Gastrocnemius medialis (tissue), 4 donors: ENCODE measurements at regions of chr4 and their contacts with region 1.

Region 1: GRCh38 chr4:173168396-173169177 is at the start of gene GALNT7:
- DNase-seq: peak in 1 of 2 donors; percentile 28
- ATAC-seq: peak; percentile 52 to 59
- H3K4me3 ChIP-seq: peak within 1 kb of the TSS; percentile 60 to 82 (median 74)
- H3K27ac ChIP-seq: peak within 1 kb of the TSS; percentile 73 to 80 (median 77)
- H3K4me1 ChIP-seq: peaks cover 6 to 9% of the 10 kb centered on the region in 2 donors
- H3K27me3 ChIP-seq: peaks cover 9 to 16% (median 14%) of the 10 kb centered on the region in 3 donors
- CTCF ChIP-seq: no peak
- POLR2A ChIP-seq: no peak
- total RNA-seq, gene GALNT7: 0.91 to 2.8 (median 1.1) TPM

Region 2: DNA sequence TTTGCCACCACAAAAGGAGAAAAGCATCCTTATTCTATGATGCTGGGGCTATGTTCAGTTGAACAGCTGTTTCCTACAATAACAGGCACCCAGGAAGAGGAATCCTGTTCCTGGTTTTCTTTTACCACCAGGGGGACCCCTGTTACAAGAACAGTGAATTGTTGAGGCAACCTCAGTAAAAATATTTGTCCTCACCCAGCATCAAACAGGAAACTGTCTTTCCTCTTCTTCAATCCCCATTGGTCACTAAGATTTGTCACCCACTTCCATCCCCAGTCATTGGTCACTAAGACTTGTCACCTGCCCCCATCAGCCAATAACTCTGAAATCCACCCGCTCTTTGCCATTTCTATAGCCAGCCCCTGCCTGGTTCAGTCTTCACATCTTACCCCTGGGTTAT is 143.5 kb before region 1 on chr4:
- in situ Hi-C with region 1: no loop called
- intact Hi-C with region 1: loop called (anchors 5 kb)
- DNase-seq: no peak
- ATAC-seq: peak; percentile 49 to 56
- H3K4me3 ChIP-seq: no peak overlapping the region
- H3K27ac ChIP-seq: no peak overlapping the region
- H3K4me1 ChIP-seq: no peaks in the 10 kb centered on the region
- H3K27me3 ChIP-seq: no peaks in the 10 kb centered on the region
- CTCF ChIP-seq: peak in 4 of 5 experiments; percentile 35 to 44 (median 40)
- POLR2A ChIP-seq: no peak

Region 3: DNA sequence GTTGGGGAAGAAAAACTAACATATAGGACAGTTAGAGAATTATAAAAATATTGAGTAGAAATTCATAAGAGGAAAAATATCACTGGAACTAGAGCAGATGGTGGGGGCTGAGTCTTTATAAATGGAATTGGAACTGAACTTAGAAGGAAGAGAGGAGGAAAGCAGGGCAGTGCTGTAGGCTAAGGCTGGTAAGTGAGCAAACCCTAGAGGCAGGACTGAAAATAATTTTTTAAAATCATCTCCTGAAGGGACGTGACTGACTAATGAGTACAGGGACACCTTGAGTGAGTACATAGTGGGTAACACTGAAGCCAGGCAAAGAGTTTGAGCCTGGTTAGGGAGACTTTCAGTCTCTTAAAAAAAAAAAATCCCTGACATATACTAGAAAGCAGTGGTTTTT is 63.3 kb after region 1 on chr4:
- in situ Hi-C with region 1: no loop called
- intact Hi-C with region 1: loop called (anchors 5 kb)
- DNase-seq: no peak
- ATAC-seq: no peak
- H3K4me3 ChIP-seq: no peak overlapping the region
- H3K27ac ChIP-seq: no peak overlapping the region
- H3K4me1 ChIP-seq: no peaks in the 10 kb centered on the region
- H3K27me3 ChIP-seq: no peaks in the 10 kb centered on the region
- CTCF ChIP-seq: no peak
- POLR2A ChIP-seq: no peak

Region 4: DNA sequence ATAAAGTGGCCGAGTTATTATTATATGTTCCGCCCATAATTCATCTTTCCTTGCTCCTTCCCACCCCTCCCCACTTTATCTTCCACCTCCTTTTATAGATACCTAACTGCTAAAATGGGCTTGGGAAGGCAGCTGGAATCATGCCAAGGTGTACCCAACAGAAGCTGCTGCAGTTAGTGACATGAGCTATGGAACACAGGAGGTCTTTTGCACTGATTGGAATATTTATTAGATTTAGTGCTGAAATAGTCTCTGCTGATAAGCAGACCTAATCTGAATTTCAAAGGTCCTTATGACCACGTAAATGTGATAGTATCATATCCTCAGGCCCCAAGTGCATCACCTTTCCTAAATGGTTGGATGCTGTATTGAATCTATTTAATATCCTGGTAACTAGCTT is 100.7 kb after region 1 on chr4:
- in situ Hi-C with region 1: no loop called
- intact Hi-C with region 1: no loop called
- DNase-seq: no peak
- ATAC-seq: no peak
- H3K4me3 ChIP-seq: no peak overlapping the region
- H3K27ac ChIP-seq: no peak overlapping the region
- H3K4me1 ChIP-seq: peaks cover 0 to 8% of the 10 kb centered on the region in 2 donors
- H3K27me3 ChIP-seq: no peaks in the 10 kb centered on the region
- CTCF ChIP-seq: no peak
- POLR2A ChIP-seq: no peak

Region 5: DNA sequence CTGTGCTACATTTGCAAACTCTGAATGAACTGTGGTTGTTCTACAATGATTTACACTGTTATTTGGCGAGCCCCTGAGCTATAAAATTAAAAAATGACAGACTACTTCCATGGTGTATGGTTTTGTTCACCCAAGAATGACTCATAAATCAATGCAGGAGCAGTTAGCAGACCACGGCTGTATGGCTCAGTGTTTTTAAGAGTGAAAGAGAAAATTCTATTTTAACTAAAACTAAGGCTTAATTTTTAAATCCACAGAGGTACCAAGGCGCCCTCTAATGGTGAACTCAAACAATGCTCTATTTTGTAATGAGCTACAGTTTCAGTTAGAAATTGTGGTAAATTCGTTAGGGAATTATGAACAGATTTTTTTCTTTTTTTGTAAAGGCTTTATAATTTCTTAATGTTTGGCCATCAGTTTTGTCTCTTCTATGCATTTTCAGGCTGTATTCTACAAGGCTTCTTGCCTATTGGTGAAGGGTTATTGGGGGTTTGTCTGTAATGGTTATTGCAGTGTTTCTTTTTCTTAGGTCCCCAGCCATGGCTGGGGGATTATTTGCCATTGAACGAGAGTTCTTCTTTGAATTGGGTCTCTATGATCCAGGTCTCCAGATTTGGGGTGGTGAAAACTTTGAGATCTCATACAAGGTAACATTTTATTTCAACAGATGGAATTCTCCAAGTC is 133.1 kb after region 1 on chr4:
- in situ Hi-C with region 1: no loop called
- intact Hi-C with region 1: no loop called
- DNase-seq: no peak
- ATAC-seq: no peak
- H3K4me3 ChIP-seq: no peak overlapping the region
- H3K27ac ChIP-seq: no peak overlapping the region
- H3K4me1 ChIP-seq: no peaks in the 10 kb centered on the region
- H3K27me3 ChIP-seq: no peaks in the 10 kb centered on the region
- CTCF ChIP-seq: peak in 4 of 5 experiments; percentile 15 to 75 (median 54)
- POLR2A ChIP-seq: no peak